ENCODE measurements at regions of chr11 and their contacts with region 1.

Region 1: DNA sequence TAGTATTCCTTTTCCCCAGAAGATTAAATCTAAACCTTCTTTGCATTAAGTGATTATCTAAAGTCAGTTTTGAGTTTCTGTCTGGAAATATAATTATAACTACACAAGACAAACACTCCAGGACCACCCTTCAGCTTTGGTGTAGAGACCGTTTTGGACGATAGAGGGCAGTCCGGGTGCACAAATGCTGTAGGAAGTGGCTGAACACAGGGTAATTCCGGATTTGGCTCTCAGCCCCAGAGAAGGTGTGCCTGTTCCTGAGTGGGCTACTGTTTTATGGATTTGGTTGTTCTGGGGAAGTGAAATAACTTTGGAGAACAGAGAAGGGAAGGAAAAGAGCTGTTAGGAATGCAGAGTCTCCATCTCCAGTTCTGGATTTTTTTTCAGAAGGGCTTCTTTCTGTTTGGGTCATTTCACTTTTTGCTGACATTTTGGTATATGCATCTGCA is 14.8 kb downstream of the EXT2 start:
- DNase-seq: no peak
- H3K4me3 ChIP-seq: no peak overlapping the region
- H3K27ac ChIP-seq: no peak overlapping the region
- H3K27me3 ChIP-seq: no peaks in the 10 kb centered on the region
- CTCF ChIP-seq: peak; percentile 89

Region 2: DNA sequence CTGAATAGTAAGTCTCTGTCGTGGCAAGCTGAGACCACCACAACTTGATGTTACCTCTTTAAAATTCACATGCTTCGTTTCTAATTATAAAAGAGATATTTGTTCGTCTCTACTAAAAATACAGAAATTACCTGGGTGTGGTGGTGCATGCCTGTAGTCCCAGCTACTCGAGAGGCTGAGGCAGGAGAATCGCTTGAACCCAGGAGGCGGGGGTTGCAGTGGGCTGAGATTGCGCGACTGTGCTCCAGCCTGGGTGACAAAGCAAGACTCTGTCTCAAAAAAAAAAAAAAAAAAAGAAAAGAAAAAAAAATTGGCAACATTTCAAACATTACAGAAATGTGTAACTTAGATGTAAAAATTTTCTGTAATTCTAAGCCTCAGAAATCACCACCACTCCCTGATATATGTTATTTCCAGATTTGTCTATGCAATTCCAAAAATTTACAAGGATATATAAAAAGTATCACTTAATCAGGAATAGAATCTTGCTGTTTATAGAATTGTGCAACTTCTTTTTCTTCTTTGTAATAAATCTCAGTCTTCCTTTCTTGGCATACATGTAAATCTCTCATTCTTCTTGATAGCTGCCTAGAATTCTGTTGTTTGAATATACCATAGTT is 130.6 kb before region 1 on chr11:
- CTCF ChIA-PET with region 1: no interaction called
- POLR2A ChIA-PET with region 1: no interaction called
- DNase-seq: no peak
- H3K4me3 ChIP-seq: no peak overlapping the region
- H3K27ac ChIP-seq: no peak overlapping the region
- H3K27me3 ChIP-seq: peaks cover 20% of the 10 kb centered on the region
- CTCF ChIP-seq: no peak

Region 3: DNA sequence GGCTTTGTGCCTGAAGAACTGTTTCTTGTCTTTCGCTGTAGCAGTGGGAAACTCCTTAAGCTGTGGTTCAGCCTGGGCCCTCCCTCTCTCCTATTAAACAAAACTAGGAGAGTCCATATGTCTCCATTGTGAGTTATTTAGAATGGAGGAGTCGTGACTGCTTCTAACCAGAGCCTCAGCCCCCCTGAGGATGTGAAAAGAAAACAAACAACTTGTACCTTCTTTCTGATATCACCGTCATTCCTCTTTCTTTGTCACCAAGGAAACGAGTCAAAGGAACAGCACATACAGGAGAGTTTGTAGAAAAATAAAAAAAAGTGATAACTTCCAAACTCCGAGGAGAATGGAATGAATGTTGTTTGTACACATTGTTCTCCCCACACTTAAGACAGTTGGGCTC is 26.3 kb before region 1 on chr11:
- CTCF ChIA-PET with region 1: no interaction called
- POLR2A ChIA-PET with region 1: no interaction called
- DNase-seq: no peak
- H3K4me3 ChIP-seq: no peak overlapping the region
- H3K27ac ChIP-seq: no peak overlapping the region
- H3K27me3 ChIP-seq: peaks cover 2% of the 10 kb centered on the region
- CTCF ChIP-seq: no peak

Region 4: GRCh38 chr11:44538375-44539054 is 428.3 kb after region 1 on chr11:
- CTCF ChIA-PET with region 1: interaction called, 11 read pairs
- POLR2A ChIA-PET with region 1: no interaction called
- DNase-seq: peak; percentile 24
- H3K4me3 ChIP-seq: no peak overlapping the region
- H3K27ac ChIP-seq: no peak overlapping the region
- H3K27me3 ChIP-seq: peaks cover 21% of the 10 kb centered on the region
- CTCF ChIP-seq: peak; percentile 94

Measured in AG04450 (cell line).